ENCODE measurements at regions of chr3 and their contacts with region 1.

Region 1: DNA sequence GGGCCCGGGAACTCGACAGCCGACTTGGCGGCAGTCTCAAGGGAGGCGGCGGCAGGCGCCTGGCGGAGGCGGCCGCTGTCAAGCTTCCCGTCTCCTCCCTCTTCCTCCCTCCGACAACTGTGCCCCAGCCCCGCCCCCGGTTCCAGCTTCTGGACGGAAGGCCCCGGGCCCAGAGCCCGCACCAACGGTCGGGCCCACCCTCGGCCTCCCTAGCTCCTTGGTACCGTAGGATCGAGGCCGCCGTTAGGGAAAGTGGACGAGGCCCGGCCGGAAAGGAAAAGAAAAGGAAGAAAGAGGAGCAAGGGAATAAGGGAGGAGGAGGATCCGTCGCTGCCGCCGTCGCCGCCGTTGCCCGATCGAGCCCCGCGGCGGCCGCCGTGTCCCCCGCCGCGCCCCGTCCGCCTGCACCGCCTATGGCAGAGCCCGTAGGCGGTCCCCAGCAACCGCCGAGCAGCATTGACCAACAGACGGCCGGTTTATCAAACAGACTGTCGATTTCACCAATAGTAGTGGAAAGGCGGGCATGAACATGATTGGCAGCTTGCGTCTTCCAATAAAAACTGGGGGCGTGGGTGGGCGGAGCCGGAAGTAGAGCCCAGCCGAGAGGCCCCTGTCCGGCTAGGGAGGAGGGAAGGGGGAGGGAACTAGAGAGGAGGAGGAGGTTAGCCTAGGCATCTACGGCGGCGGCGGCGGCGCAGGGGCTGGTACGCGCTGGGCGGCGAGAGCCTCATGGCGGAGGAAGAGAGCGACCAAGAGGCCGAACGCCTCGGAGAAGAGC is at the starts of genes CGGBP1 and ZNF654:
- DNase-seq: peak; percentile 98 to 99 (median 99)
- ATAC-seq: peak; percentile 88
- H3K4me3 ChIP-seq: peak within 1 kb of the TSS; percentile 97 to 98
- H3K4me3 Mint-ChIP-seq: peak within 1 kb of the TSS; percentile 93
- H3K27ac ChIP-seq: peak within 1 kb of the TSS; percentile 81 to 94
- H3K27ac Mint-ChIP-seq: peak within 1 kb of the TSS; percentile 99
- H3K4me1 ChIP-seq: peaks cover 46% of the 10 kb centered on the region
- H3K4me1 Mint-ChIP-seq: peaks cover 64% of the 10 kb centered on the region
- H3K27me3 ChIP-seq: no peaks in the 10 kb centered on the region
- H3K27me3 Mint-ChIP-seq: no peaks in the 10 kb centered on the region
- CTCF ChIP-seq: no peak
- total RNA-seq, gene CGGBP1: 64.1 to 66.7 TPM
- total RNA-seq, gene ZNF654: 13.2 to 15.0 TPM

Region 2: GRCh38 chr3:88003115-88003755 is 55.5 kb before region 1 on chr3:
- CTCF ChIA-PET with region 1: no interaction called
- POLR2A ChIA-PET with region 1: interaction called, 7 read pairs
- intact Hi-C with region 1: loop called in 1 of 2 experiments (anchors 10 kb)
- DNase-seq: peak in 2 of 9 experiments; percentile 39 to 54
- ATAC-seq: no peak
- H3K4me3 ChIP-seq: no peak overlapping the region
- H3K4me3 Mint-ChIP-seq: no peak overlapping the region
- H3K27ac ChIP-seq: no peak overlapping the region
- H3K27ac Mint-ChIP-seq: no peak overlapping the region
- H3K4me1 ChIP-seq: no peaks in the 10 kb centered on the region
- H3K4me1 Mint-ChIP-seq: peaks cover 14% of the 10 kb centered on the region
- H3K27me3 ChIP-seq: no peaks in the 10 kb centered on the region
- H3K27me3 Mint-ChIP-seq: peaks cover 7% of the 10 kb centered on the region
- CTCF ChIP-seq: peak; percentile 63

Region 3: DNA sequence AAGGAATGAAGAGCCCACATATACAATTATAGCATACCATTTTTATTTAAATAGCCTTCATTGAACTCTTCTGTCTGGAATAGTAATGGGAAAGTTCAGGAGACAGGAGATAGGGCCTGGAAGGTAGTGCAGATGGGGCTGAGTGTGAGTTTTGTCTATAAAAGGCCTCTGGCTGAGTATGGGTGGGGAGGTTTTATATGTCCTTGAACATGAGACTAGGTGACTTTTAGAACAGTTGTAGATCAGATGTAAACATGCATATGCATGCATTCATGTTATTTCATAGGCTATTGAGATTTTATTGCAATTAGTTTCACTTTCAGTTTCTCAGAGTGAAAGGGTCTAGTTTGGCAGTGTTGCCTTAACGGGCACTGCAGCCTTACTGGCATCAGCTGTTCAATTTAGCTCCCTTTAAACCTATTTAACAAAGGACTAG is 27.1 kb before region 1 on chr3:
- CTCF ChIA-PET with region 1: interaction called, 3 read pairs
- POLR2A ChIA-PET with region 1: interaction called, 22 read pairs
- intact Hi-C with region 1: loop called in 1 of 2 experiments (anchors 1 kb)
- DNase-seq: peak in 4 of 9 experiments; percentile 11 to 75 (median 38)
- ATAC-seq: peak; percentile 86
- H3K4me3 ChIP-seq: peak overlapping the region; percentile 36 to 51
- H3K4me3 Mint-ChIP-seq: peak overlapping the region; percentile 86
- H3K27ac ChIP-seq: peak overlapping the region; percentile 45 to 76
- H3K27ac Mint-ChIP-seq: peak overlapping the region; percentile 92
- H3K4me1 ChIP-seq: peaks cover 26% of the 10 kb centered on the region
- H3K4me1 Mint-ChIP-seq: peaks cover 35% of the 10 kb centered on the region
- H3K27me3 ChIP-seq: no peaks in the 10 kb centered on the region
- H3K27me3 Mint-ChIP-seq: no peaks in the 10 kb centered on the region
- CTCF ChIP-seq: no peak

Region 4: GRCh38 chr3:88101142-88101541 is 42.4 kb after region 1 on chr3:
- CTCF ChIA-PET with region 1: no interaction called
- POLR2A ChIA-PET with region 1: no interaction called
- intact Hi-C with region 1: loop called in 1 of 2 experiments (anchors 5 kb)
- DNase-seq: no peak
- ATAC-seq: no peak
- H3K4me3 ChIP-seq: no peak overlapping the region
- H3K4me3 Mint-ChIP-seq: no peak overlapping the region
- H3K27ac ChIP-seq: no peak overlapping the region
- H3K27ac Mint-ChIP-seq: no peak overlapping the region
- H3K4me1 ChIP-seq: no peaks in the 10 kb centered on the region
- H3K4me1 Mint-ChIP-seq: peaks cover 20% of the 10 kb centered on the region
- H3K27me3 ChIP-seq: no peaks in the 10 kb centered on the region
- H3K27me3 Mint-ChIP-seq: no peaks in the 10 kb centered on the region
- CTCF ChIP-seq: no peak

Region 5: GRCh38 chr3:88149509-88150362 is 91.0 kb after region 1 on chr3 and contains the start of gene C3orf38:
- CTCF ChIA-PET with region 1: interaction called, 4 read pairs
- POLR2A ChIA-PET with region 1: interaction called, 53 read pairs
- intact Hi-C with region 1: loop called (anchors 1 to 2 kb)
- DNase-seq: peak; percentile 63 to 89 (median 78)
- ATAC-seq: peak; percentile 94
- H3K4me3 ChIP-seq: peak within 1 kb of the TSS; percentile 91 to 99
- H3K4me3 Mint-ChIP-seq: peak within 1 kb of the TSS; percentile 99
- H3K27ac ChIP-seq: peak within 1 kb of the TSS; percentile 85 to 89
- H3K27ac Mint-ChIP-seq: peak within 1 kb of the TSS; percentile 100
- H3K4me1 ChIP-seq: peaks cover 27% of the 10 kb centered on the region
- H3K4me1 Mint-ChIP-seq: peaks cover 39% of the 10 kb centered on the region
- H3K27me3 ChIP-seq: no peaks in the 10 kb centered on the region
- H3K27me3 Mint-ChIP-seq: no peaks in the 10 kb centered on the region
- CTCF ChIP-seq: no peak
- total RNA-seq, gene C3orf38: 41.3 to 45.5 TPM